Right ventricle myocardium inferior (tissue), 1 donor: ENCODE measurements at regions of chr17 and their contacts with region 1.

Region 1: GRCh38 chr17:79915850-79916430 is 76.7 kb upstream of the CBX4 start:
- DNase-seq: no peak
- ATAC-seq: no peak

Region 2: DNA sequence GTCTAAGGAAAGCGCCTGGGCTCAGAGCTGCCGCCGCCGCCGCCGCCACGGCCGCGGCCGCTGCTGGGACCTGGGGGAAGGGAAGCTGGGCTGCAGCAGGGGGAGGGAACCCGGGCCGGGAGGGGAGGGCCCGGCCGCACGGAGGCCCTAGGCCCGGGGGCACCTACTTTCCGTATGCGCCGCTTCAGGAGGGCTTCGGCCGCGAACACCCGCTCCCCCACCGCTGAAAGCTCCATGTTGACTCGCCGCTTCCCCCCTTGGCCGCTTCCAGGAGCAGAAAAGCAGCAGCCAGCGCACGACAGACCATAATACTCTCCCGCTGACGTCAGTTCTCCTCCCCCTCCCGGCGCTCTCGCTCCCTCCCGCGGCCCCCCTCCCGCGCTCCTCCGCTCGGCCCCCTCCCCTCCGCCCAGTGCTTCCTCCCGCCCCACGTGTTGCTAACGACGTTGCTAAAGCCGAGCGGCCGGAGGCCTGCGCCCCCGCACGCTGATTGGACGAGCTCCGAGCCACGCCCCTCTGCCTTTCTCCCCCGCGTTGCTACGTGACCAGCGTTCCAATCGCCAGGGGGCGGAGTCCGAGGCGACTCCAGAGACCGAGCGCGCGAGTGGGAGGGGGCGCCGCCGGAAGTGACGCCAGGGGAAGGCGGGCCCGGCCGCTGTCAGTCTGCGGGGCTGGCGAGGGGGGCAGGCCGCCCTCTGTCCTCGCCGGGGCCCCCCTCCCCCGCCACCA is 119.0 kb before region 1 on chr17 and contains the start of gene CBX8:
- intact Hi-C with region 1: loop called (anchors 10 kb)
- DNase-seq: peak; percentile 100
- ATAC-seq: peak; percentile 98
- total RNA-seq, gene CBX8: 5.3 TPM